Activated CD8-positive, alpha-beta T cell treated with anti-CD3 and anti-CD28 coated beads for 36 hours (primary cell): ENCODE measurements at regions of chr6 and their contacts with region 1.

Region 1: DNA sequence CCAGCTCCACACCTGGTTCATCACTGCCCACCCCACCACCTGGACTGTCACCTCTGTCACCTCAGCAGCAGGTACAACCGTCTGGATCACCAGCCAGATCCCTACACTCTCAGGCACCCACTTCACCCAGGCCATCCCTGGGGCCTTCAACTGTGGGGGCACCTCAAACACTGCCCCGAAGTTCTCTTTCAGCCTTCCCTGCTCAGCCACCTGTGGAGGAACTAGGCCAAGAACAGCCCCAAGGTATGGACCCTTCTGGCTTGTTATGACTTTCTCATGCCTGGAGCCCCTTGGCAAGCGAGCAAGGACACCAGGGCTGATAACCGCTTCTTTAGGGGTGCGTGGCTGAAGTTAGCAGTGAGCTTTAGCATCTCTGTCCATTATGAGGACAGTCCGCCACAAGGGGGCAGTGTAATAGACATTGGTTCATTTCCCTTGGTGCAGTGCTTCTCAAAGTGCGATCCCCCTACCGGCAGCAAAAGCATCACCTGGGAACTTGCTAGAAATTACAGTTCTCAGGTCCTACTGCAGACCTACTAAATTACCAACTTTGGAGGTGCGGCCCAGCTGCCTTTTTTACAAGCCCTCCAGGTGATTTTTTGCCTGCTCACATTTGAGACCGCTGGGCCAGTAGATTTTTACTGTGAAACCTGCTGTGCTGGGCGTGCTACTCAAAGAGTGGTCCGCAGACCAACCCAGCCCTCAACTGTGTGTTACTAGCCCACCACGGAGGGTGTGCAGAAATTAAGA is 32.5 kb downstream of the PNPLA1 start:
- DNase-seq: peak; percentile 98
- ATAC-seq: peak; percentile 98
- H3K4me3 Mint-ChIP-seq: no peak overlapping the region
- H3K27ac Mint-ChIP-seq: no peak overlapping the region
- H3K4me1 Mint-ChIP-seq: no peaks in the 10 kb centered on the region
- H3K27me3 Mint-ChIP-seq: peaks cover 8% of the 10 kb centered on the region
- CTCF ChIP-seq: peak; percentile 99

Region 2: GRCh38 chr6:36280467-36280866 is 21.9 kb before region 1 on chr6:
- CTCF ChIA-PET with region 1: interaction called, 14 read pairs
- POLR2A ChIA-PET with region 1: no interaction called
- intact Hi-C with region 1: no loop called
- DNase-seq: no peak
- ATAC-seq: no peak
- H3K4me3 Mint-ChIP-seq: no peak overlapping the region
- H3K27ac Mint-ChIP-seq: no peak overlapping the region
- H3K4me1 Mint-ChIP-seq: no peaks in the 10 kb centered on the region
- H3K27me3 Mint-ChIP-seq: peaks cover 28% of the 10 kb centered on the region
- CTCF ChIP-seq: no peak

Region 3: GRCh38 chr6:36314221-36315014 is 12.0 kb after region 1 on chr6:
- CTCF ChIA-PET with region 1: interaction called, 60 read pairs
- POLR2A ChIA-PET with region 1: no interaction called
- intact Hi-C with region 1: no loop called
- DNase-seq: no peak
- ATAC-seq: peak; percentile 56
- H3K4me3 Mint-ChIP-seq: no peak overlapping the region
- H3K27ac Mint-ChIP-seq: no peak overlapping the region
- H3K4me1 Mint-ChIP-seq: no peaks in the 10 kb centered on the region
- H3K27me3 Mint-ChIP-seq: no peaks in the 10 kb centered on the region
- CTCF ChIP-seq: no peak

Region 4: DNA sequence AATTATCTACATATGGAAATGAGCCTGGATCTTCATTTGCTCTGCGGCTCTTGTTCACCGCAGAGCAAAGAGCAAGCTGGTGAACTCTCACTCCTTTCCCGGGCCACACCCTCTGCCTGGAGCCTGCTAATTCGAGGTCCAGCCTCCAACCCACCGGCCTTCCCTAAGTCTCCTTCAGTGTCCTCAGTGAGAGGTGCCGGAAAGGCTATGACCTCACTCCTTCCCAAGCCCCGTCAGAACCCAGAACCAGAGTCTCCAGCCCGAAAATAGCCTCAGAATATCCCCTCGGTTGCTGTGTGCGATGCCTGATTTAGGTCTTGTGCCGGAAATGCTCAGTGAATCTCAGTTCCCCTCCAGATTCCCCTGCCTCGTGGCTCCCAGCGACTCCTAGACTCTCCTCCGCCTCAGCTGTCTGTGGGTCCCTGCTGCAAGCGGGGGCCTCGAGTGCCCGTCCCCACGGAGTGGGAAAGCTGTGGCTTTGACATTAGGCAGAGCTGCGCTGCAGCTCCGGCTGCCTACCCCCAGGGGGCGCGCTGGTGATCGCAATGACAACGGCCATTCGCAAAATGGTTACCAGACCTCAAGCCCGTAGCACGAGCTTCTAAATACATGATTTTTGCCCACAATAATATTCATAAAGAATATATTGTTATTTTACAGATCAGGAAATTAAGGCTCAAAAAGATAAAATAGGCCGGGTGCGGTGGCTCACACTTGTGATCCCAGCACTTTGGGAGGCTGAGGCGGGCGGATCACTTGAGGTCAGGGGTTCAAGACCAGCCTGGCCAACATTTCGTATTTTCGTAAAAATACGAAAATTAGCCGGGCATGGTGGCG is 38.4 kb after region 1 on chr6:
- CTCF ChIA-PET with region 1: interaction called, 10 read pairs
- POLR2A ChIA-PET with region 1: no interaction called
- intact Hi-C with region 1: no loop called
- DNase-seq: peak; percentile 83
- ATAC-seq: peak; percentile 91
- H3K4me3 Mint-ChIP-seq: no peak overlapping the region
- H3K27ac Mint-ChIP-seq: no peak overlapping the region
- H3K4me1 Mint-ChIP-seq: peaks cover 12% of the 10 kb centered on the region
- H3K27me3 Mint-ChIP-seq: peaks cover 14% of the 10 kb centered on the region
- CTCF ChIP-seq: peak; percentile 98

Region 5: GRCh38 chr6:36360241-36361054 is 58.0 kb after region 1 on chr6:
- CTCF ChIA-PET with region 1: interaction called, 63 read pairs
- POLR2A ChIA-PET with region 1: no interaction called
- intact Hi-C with region 1: loop called (anchors 5 kb)
- DNase-seq: peak; percentile 84
- ATAC-seq: peak; percentile 93
- H3K4me3 Mint-ChIP-seq: no peak overlapping the region
- H3K27ac Mint-ChIP-seq: no peak overlapping the region
- H3K4me1 Mint-ChIP-seq: peaks cover 12% of the 10 kb centered on the region
- H3K27me3 Mint-ChIP-seq: no peaks in the 10 kb centered on the region
- CTCF ChIP-seq: peak; percentile 79

Region 6: GRCh38 chr6:36414481-36414880 is 112.1 kb after region 1 on chr6:
- CTCF ChIA-PET with region 1: no interaction called
- POLR2A ChIA-PET with region 1: no interaction called
- intact Hi-C with region 1: no loop called
- DNase-seq: no peak
- ATAC-seq: no peak
- H3K4me3 Mint-ChIP-seq: no peak overlapping the region
- H3K27ac Mint-ChIP-seq: no peak overlapping the region
- H3K4me1 Mint-ChIP-seq: no peaks in the 10 kb centered on the region
- H3K27me3 Mint-ChIP-seq: no peaks in the 10 kb centered on the region
- CTCF ChIP-seq: no peak

Region 7: GRCh38 chr6:36487698-36488097 is 185.3 kb after region 1 on chr6:
- CTCF ChIA-PET with region 1: no interaction called
- POLR2A ChIA-PET with region 1: no interaction called
- intact Hi-C with region 1: no loop called
- DNase-seq: no peak
- ATAC-seq: no peak
- H3K4me3 Mint-ChIP-seq: no peak overlapping the region
- H3K27ac Mint-ChIP-seq: peak overlapping the region; percentile 34
- H3K4me1 Mint-ChIP-seq: peaks cover 3% of the 10 kb centered on the region
- H3K27me3 Mint-ChIP-seq: no peaks in the 10 kb centered on the region
- CTCF ChIP-seq: no peak